ENCODE measurements at regions of chr1 and their contacts with region 1.

Region 1: GRCh38 chr1:179954493-179955297 is at the start of gene CEP350:
- DNase-seq: peak; percentile 99
- ATAC-seq: peak; percentile 97 to 99 (median 98)
- H3K4me3 ChIP-seq: peak within 1 kb of the TSS; percentile 72 to 96 (median 86)
- H3K27ac ChIP-seq: peak within 1 kb of the TSS; percentile 83 to 98 (median 95)
- H3K4me1 ChIP-seq: peaks cover 0 to 48% (median 32%) of the 10 kb centered on the region in 12 donors
- H3K27me3 ChIP-seq: no peaks in the 10 kb centered on the region
- CTCF ChIP-seq: peak in 1 of 12 donors; percentile 11
- POLR2A ChIP-seq: peak; percentile 46 to 71
- total RNA-seq, gene CEP350: 29.9 to 65.3 (median 41.8) TPM

Region 2: DNA sequence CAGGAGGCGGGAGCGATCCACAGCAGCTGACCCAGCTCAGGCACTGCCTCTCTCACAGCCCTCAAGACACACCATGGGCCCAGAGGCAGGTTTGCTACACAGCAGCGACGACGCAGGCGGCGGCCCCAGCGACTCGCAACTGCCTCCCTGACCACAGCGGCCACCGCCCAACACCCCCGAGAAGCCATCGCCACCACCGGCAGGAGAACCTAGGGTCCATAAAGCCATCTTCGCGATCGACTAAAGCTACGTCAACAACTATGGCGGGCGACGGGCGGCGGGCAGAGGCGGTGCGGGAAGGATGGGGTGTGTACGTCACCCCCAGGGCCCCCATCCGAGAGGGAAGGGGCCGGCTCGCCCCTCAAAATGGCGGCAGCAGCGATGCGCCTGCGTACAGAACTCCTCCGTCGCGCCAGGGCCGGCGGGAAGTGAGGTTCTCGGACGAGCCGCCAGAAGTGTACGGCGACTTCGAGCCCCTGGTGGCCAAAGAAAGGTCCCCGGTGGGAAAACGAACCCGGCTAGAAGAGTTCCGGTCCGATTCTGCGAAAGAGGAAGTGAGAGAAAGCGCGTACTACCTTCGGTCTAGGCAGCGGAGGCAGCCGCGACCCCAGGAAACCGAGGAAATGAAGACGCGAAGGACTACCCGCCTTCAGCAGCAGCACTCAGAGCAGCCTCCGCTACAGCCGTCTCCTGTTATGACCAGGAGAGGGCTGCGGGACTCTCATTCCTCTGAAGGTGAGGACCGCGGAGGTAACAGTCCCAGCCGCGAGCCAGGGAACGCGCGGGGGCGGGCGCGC is 72.3 kb before region 1 on chr1 and contains the start of gene TOR1AIP1:
- intact Hi-C with region 1: loop called in 9 of 10 experiments (anchors 1 to 10 kb)
- DNase-seq: peak; percentile 97 to 99 (median 98)
- ATAC-seq: peak; percentile 93 to 96 (median 95)
- H3K4me3 ChIP-seq: peak within 1 kb of the TSS; percentile 72 to 88 (median 82)
- H3K27ac ChIP-seq: peak within 1 kb of the TSS; percentile 98 to 100 (median 99)
- H3K4me1 ChIP-seq: peaks cover 0 to 58% (median 38%) of the 10 kb centered on the region in 12 donors
- H3K27me3 ChIP-seq: no peaks in the 10 kb centered on the region
- CTCF ChIP-seq: peak in 11 of 12 donors; percentile 29 to 58 (median 51)
- POLR2A ChIP-seq: peak; percentile 3 to 88
- total RNA-seq, gene TOR1AIP1: 25.4 to 68.2 (median 47.4) TPM

Region 3: DNA sequence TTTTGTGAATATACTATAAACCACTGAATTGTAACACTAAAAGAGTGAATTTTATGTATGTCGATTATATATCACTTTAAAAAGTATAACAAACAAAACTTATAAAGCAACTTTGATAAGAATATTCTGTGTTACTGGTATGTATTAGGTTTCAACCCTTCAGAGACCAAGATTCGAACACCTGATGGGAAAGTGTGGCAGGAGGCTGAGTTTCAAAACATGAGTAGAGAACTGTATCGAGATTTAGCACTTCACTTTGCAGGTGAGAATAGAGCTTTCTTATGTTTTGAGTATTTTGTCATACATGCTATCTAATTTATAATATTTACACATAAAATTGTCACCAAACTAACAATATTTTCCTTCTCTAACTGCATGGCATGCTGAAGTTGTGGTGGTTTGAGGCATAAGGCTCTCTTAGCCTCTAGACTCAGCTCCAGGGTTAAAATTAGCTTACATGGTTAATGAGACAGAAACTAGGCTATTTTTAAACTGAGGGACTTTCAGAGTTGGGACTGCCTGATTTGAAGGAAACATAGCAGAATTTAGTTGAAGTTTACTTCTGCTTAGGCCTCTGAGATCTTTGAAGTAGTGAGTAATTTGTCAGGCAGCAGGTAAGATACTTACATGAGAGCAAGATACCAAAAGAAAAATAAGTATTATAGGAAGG is 48.5 kb after region 1 on chr1:
- intact Hi-C with region 1: loop called in 1 of 10 experiments (anchors 5 kb)
- DNase-seq: no peak
- ATAC-seq: peak; percentile 20 to 49 (median 40)
- H3K4me3 ChIP-seq: no peak overlapping the region
- H3K27ac ChIP-seq: peak overlapping the region in 5 of 12 donors; percentile 0 to 43 (median 19)
- H3K4me1 ChIP-seq: peaks cover 0 to 38% (median 12%) of the 10 kb centered on the region in 12 donors
- H3K27me3 ChIP-seq: no peaks in the 10 kb centered on the region
- CTCF ChIP-seq: no peak
- POLR2A ChIP-seq: no peak

Region 4: GRCh38 chr1:180154325-180155181 is 199.9 kb after region 1 on chr1 and contains the start of gene QSOX1:
- intact Hi-C with region 1: loop called in 1 of 10 experiments (anchors 10 kb)
- DNase-seq: peak; percentile 91 to 96 (median 93)
- ATAC-seq: peak; percentile 72 to 97 (median 92)
- H3K4me3 ChIP-seq: peak within 1 kb of the TSS; percentile 70 to 100 (median 98)
- H3K27ac ChIP-seq: peak within 1 kb of the TSS; percentile 83 to 99 (median 96)
- H3K4me1 ChIP-seq: peaks cover 0 to 54% (median 23%) of the 10 kb centered on the region in 12 donors
- H3K27me3 ChIP-seq: no peaks in the 10 kb centered on the region
- CTCF ChIP-seq: peak in 8 of 12 donors; percentile 15 to 47 (median 38)
- POLR2A ChIP-seq: peak; percentile 76 to 95
- total RNA-seq, gene QSOX1: 62.3 to 250 (median 122) TPM

Measured in heart left ventricle (tissue), 16 donors.